B cell (primary cell): ENCODE measurements at regions of chr16 and their contacts with region 1.

Region 1: GRCh38 chr16:2513405-2514322 is at the start of gene ATP6V0C:
- DNase-seq: peak; percentile 98
- ATAC-seq: peak; percentile 80
- H3K4me3 ChIP-seq: peak within 1 kb of the TSS; percentile 75 to 96 (median 82)
- H3K4me3 Mint-ChIP-seq: peak within 1 kb of the TSS; percentile 96
- H3K27ac ChIP-seq: peak within 1 kb of the TSS; percentile 94 to 99
- H3K27ac Mint-ChIP-seq: peak within 1 kb of the TSS; percentile 99
- H3K4me1 ChIP-seq: peaks cover 79 to 88% of the 10 kb centered on the region in 2 donors
- H3K4me1 Mint-ChIP-seq: peaks cover 80% of the 10 kb centered on the region
- H3K27me3 ChIP-seq: no peaks in the 10 kb centered on the region
- H3K27me3 Mint-ChIP-seq: no peaks in the 10 kb centered on the region
- CTCF ChIP-seq: no peak
- total RNA-seq, gene ATP6V0C: 106 and 118 TPM in 2 replicates

Region 2: GRCh38 chr16:2205104-2205966 is 308.3 kb before region 1 on chr16 and contains the start of gene MLST8:
- CTCF ChIA-PET with region 1: interaction called, 3 read pairs
- POLR2A ChIA-PET with region 1: no interaction called
- intact Hi-C with region 1: loop called (anchors 1 kb)
- DNase-seq: peak; percentile 98
- ATAC-seq: peak; percentile 90
- H3K4me3 ChIP-seq: peak within 1 kb of the TSS; percentile 73 to 94 (median 76)
- H3K4me3 Mint-ChIP-seq: peak within 1 kb of the TSS; percentile 87
- H3K27ac ChIP-seq: peak within 1 kb of the TSS; percentile 86 to 89
- H3K27ac Mint-ChIP-seq: peak within 1 kb of the TSS; percentile 94
- H3K4me1 ChIP-seq: peaks cover 12 to 22% of the 10 kb centered on the region in 2 donors
- H3K4me1 Mint-ChIP-seq: peaks cover 21% of the 10 kb centered on the region
- H3K27me3 ChIP-seq: no peaks in the 10 kb centered on the region
- H3K27me3 Mint-ChIP-seq: peaks cover 3% of the 10 kb centered on the region
- CTCF ChIP-seq: peak; percentile 32
- total RNA-seq, gene MLST8: 36.1 and 39.0 TPM in 2 replicates

Region 3: GRCh38 chr16:2340564-2341455 is 172.9 kb before region 1 on chr16 and contains the start of gene ABCA3:
- CTCF ChIA-PET with region 1: no interaction called
- POLR2A ChIA-PET with region 1: no interaction called
- intact Hi-C with region 1: loop called (anchors 2 kb)
- DNase-seq: peak; percentile 96
- ATAC-seq: peak; percentile 83
- H3K4me3 ChIP-seq: peak within 1 kb of the TSS; percentile 17 to 69 (median 58)
- H3K4me3 Mint-ChIP-seq: peak within 1 kb of the TSS; percentile 86
- H3K27ac ChIP-seq: no peak within 1 kb of the TSS
- H3K27ac Mint-ChIP-seq: peak within 1 kb of the TSS; percentile 90
- H3K4me1 ChIP-seq: peaks cover 15 to 19% of the 10 kb centered on the region in 2 donors
- H3K4me1 Mint-ChIP-seq: peaks cover 12% of the 10 kb centered on the region
- H3K27me3 ChIP-seq: peaks cover 0 to 22% (median 3%) of the 10 kb centered on the region in 4 experiments
- H3K27me3 Mint-ChIP-seq: no peaks in the 10 kb centered on the region
- CTCF ChIP-seq: peak; percentile 100
- total RNA-seq, gene ABCA3: 5.1 and 5.4 TPM in 2 replicates

Region 4: DNA sequence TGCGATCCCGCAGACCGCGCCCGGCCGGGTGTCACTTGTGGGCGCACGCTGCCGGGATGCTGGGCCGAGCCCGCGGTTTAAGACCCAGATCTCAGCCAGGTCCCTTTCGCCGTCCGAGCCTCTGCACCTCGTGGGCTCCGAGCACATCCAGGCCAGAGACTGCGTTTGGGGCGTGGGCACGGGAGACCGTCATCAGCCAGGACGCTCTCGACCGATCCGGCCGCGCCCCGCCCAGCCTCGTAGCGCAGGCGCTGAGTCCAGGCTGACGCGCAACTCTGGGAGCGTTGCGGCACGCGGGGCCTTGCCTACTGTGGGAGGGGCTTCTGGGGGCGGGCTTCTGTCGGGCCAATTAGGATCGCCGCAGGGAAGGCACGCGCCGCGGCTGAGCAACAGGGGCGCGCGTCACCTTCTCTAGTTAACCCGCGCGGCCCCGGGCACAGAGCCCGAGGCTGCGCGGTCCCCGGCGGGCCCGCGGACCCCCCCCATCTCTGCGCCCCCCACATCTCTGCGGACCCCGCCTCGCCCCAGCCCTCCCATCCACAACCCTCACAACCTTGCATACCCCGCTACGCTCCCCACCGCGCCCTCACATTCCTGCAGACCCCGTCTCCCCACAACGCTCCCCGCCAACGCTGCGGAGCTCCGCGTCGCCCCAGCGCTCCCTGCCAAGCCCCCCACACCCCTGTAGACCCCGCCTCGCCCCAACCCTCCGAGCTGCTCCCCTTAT is 18.3 kb after region 1 on chr16:
- CTCF ChIA-PET with region 1: interaction called, 8 read pairs
- POLR2A ChIA-PET with region 1: interaction called, 25 read pairs
- intact Hi-C with region 1: loop called (anchors 1 kb)
- DNase-seq: peak; percentile 98
- ATAC-seq: peak; percentile 93
- H3K4me3 ChIP-seq: peak overlapping the region in 4 of 5 experiments; percentile 80 to 93 (median 88)
- H3K4me3 Mint-ChIP-seq: peak overlapping the region; percentile 94
- H3K27ac ChIP-seq: peak overlapping the region; percentile 96 to 100
- H3K27ac Mint-ChIP-seq: peak overlapping the region; percentile 97
- H3K4me1 ChIP-seq: peaks cover 8 to 26% of the 10 kb centered on the region in 2 donors
- H3K4me1 Mint-ChIP-seq: peaks cover 21% of the 10 kb centered on the region
- H3K27me3 ChIP-seq: no peaks in the 10 kb centered on the region
- H3K27me3 Mint-ChIP-seq: no peaks in the 10 kb centered on the region
- CTCF ChIP-seq: no peak

Region 5: GRCh38 chr16:2537453-2538379 is 24.1 kb after region 1 on chr16 and contains the start of gene PDPK1:
- CTCF ChIA-PET with region 1: interaction called, 8 read pairs
- POLR2A ChIA-PET with region 1: interaction called, 25 read pairs
- intact Hi-C with region 1: loop called (anchors 1 kb)
- DNase-seq: peak; percentile 96
- ATAC-seq: peak; percentile 89
- H3K4me3 ChIP-seq: peak within 1 kb of the TSS; percentile 47 to 68 (median 64)
- H3K4me3 Mint-ChIP-seq: peak within 1 kb of the TSS; percentile 89
- H3K27ac ChIP-seq: peak within 1 kb of the TSS; percentile 73 to 77
- H3K27ac Mint-ChIP-seq: peak within 1 kb of the TSS; percentile 92
- H3K4me1 ChIP-seq: peaks cover 33 to 49% of the 10 kb centered on the region in 2 donors
- H3K4me1 Mint-ChIP-seq: peaks cover 41% of the 10 kb centered on the region
- H3K27me3 ChIP-seq: no peaks in the 10 kb centered on the region
- H3K27me3 Mint-ChIP-seq: no peaks in the 10 kb centered on the region
- CTCF ChIP-seq: no peak
- total RNA-seq, gene PDPK1: 84.1 and 86.0 TPM in 2 replicates